ENCODE measurements at regions of chr17 and their contacts with region 1.

Region 1: GRCh38 chr17:8156246-8156992 is 4.2 kb upstream of the PER1 start:
- DNase-seq: peak; percentile 97 to 100 (median 100)
- ATAC-seq: peak; percentile 67 to 71
- H3K4me3 Mint-ChIP-seq: no peak overlapping the region
- H3K27ac Mint-ChIP-seq: no peak overlapping the region
- H3K4me1 Mint-ChIP-seq: peaks cover 31 to 70% (median 54%) of the 10 kb centered on the region in 4 donors
- H3K27me3 Mint-ChIP-seq: peaks cover 0 to 2% (median 0%) of the 10 kb centered on the region in 5 donors

Region 2: GRCh38 chr17:8167526-8167925 is 11.1 kb after region 1 on chr17:
- POLR2A ChIA-PET with region 1: interaction called, 1,171 read pairs
- DNase-seq: no peak
- ATAC-seq: no peak
- H3K4me3 Mint-ChIP-seq: no peak overlapping the region
- H3K27ac Mint-ChIP-seq: peak overlapping the region in 1 of 10 donors; percentile 8
- H3K4me1 Mint-ChIP-seq: peaks cover 16 to 46% (median 36%) of the 10 kb centered on the region in 4 donors
- H3K27me3 Mint-ChIP-seq: no peaks in the 10 kb centered on the region

Region 3: DNA sequence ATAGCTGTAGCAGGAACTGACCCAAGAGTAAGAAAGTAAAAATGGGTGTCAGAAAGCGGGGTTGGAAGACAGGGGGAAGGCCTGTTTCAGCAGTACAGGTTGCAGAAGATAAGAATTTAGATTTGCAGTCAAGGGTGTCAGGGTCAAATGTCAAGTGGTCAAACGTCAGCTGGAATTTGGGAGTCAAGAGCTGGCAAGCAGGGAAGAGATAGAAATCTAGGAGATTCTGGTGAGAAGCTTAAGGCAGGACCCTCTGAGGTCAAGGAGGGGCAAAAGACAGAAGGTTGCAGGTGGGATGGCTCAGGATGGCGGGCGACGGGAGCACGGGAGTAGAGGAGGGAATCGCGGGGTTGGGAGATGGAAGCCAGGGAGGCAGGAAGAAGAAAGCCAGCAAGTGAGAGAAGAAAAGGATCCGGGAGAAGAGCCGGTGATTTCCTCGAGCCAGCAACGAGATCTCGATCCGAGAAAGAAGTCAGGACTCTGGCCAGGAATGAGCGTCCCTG is 138.4 kb after region 1 on chr17:
- POLR2A ChIA-PET with region 1: interaction called, 10 read pairs
- DNase-seq: no peak
- ATAC-seq: no peak
- H3K4me3 Mint-ChIP-seq: peak overlapping the region; percentile 88 to 97 (median 94)
- H3K27ac Mint-ChIP-seq: peak overlapping the region; percentile 84 to 97 (median 95)
- H3K4me1 Mint-ChIP-seq: peaks cover 20 to 39% (median 31%) of the 10 kb centered on the region in 4 donors
- H3K27me3 Mint-ChIP-seq: no peaks in the 10 kb centered on the region

Measured in naive thymus-derived CD8-positive, alpha-beta T cell (primary cell).